Activated naive CD4-positive, alpha-beta T cell treated with anti-CD3 and anti-CD28 coated beads, Interleukin-2, amount 10 ng/mL, durations not matched to agents 7 days and 5 days (primary cell): ENCODE measurements at regions of chr13 and their contacts with region 1.

Region 1: DNA sequence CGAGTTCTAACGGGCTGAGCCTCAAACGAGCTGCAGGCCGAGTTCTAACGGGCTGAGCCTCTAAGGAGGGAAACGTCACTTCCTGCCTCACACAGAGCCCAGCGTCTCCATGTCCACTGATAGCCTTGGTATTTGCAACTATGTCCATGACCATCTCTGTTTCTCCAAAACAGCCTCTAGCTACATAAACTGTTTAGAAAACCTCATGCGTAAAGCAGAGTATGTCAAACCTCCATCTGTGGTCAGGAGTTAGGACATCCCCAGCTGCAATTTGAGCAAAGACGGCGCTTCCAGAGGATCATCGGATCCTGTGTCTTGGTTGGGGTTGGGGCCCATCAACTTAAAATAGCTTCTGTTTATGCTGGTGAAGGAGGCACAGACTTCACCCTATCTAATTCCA is 20.8 kb downstream of the RASA3 start:
- DNase-seq: no peak
- H3K4me3 Mint-ChIP-seq: no peak overlapping the region
- H3K27ac Mint-ChIP-seq: peak overlapping the region; percentile 91
- H3K4me1 Mint-ChIP-seq: peaks cover 74% of the 10 kb centered on the region
- H3K27me3 Mint-ChIP-seq: no peaks in the 10 kb centered on the region

Region 2: DNA sequence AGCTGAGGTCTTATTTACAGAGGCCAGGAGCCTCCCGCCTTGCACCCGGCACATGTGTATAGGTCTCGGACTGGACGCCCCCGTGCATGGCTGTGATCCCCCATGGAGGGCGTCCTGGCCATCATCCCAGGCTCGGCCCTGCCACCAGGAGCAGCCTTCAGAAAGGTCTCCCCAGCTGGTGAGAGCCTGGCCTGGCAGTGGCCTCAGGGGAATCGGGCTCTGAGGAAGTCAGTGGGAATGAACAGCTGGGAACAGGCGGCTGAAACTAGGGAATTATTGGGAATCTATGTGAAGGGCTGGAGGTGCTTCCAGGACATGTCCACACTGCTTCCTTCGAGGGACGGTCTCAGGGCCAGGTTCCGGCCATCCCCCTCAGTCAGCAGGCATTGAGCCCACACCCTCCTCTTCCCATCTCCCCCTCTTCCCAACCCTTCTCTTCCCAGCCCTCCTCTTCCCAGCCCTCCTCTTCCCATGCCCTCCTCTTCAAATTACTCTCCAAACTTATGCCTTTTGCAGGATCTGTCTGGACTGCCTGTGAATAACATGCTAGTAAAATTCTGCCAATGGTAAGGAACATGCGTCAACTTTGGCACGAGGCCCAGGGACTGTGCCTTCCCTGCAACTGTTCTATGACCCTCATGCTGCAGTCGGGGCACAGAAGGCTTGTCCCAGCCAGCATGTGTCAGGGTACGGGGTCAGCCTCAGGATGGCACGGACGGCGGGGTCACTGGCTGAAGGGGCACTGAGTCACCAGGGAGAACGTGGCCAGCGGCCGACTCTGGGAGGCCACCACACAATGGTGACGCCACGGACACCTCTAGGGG is 113.5 kb before region 1 on chr13:
- CTCF ChIA-PET with region 1: no interaction called
- DNase-seq: no peak
- H3K4me3 Mint-ChIP-seq: no peak overlapping the region
- H3K27ac Mint-ChIP-seq: peak overlapping the region; percentile 72
- H3K4me1 Mint-ChIP-seq: no peaks in the 10 kb centered on the region
- H3K27me3 Mint-ChIP-seq: no peaks in the 10 kb centered on the region

Region 3: GRCh38 chr13:114226699-114227323 is 115.2 kb after region 1 on chr13:
- CTCF ChIA-PET with region 1: interaction called, 10 read pairs
- DNase-seq: peak; percentile 90
- H3K4me3 Mint-ChIP-seq: no peak overlapping the region
- H3K27ac Mint-ChIP-seq: peak overlapping the region; percentile 70
- H3K4me1 Mint-ChIP-seq: peaks cover 47% of the 10 kb centered on the region
- H3K27me3 Mint-ChIP-seq: peaks cover 40% of the 10 kb centered on the region